Naive thymus-derived CD4-positive, alpha-beta T cell (primary cell): ENCODE measurements at regions of chr4 and their contacts with region 1.

Region 1: DNA sequence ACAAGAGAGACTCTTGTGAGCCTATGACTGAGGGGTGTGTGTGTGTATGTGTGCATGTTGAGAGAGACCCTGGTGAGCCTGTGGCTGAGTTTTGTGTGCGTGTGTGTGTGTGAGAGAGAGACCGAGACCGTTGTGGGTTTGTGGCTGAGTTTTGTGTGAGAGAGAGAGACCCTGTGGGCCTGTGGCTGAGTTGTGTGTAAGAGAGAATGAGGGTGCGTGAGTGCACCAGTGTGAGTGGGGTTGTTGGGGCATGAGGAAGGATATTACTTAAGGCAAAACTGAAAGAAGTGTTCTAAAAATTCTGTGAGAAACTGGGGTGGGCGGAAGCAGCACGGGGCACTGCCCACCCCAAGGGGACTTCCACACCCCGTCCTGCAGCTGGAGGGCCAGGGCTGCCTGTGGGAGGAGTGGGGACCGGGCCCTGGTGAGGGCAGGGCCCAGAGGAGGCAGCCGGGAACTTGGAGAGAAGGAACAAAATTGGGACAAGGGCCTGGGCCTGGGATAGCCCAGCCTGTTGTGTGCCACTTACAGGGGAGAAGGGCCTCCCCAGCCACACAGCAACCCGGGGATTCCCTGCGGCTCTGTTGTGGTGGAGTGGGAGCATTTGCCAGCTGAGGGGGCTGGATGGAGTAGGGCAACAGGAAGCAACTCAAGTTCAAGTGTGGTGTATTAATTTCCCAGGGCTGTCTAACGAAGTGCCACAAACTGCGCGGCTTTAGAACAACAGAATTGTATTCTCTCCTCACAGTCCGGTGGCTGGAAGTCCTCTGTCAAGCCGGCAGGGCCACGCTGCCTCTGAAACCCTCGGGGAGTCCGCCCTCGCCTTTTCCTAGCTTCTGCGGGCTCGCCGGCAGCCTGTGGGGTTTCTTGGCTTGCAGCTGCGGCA is 22.1 kb downstream of the TMEM131L start:
- DNase-seq: peak; percentile 51 to 87 (median 79)
- ATAC-seq: peak; percentile 81
- H3K4me3 ChIP-seq: peak overlapping the region; percentile 59
- H3K4me3 Mint-ChIP-seq: peak overlapping the region; percentile 79 to 93 (median 84)
- H3K27ac ChIP-seq: peak overlapping the region; percentile 85
- H3K27ac Mint-ChIP-seq: peak overlapping the region; percentile 87 to 99 (median 95)
- H3K4me1 ChIP-seq: peaks cover 57 to 71% of the 10 kb centered on the region in 2 donors
- H3K4me1 Mint-ChIP-seq: peaks cover 68 to 91% (median 81%) of the 10 kb centered on the region in 7 donors
- H3K27me3 ChIP-seq: no peaks in the 10 kb centered on the region
- H3K27me3 Mint-ChIP-seq: no peaks in the 10 kb centered on the region

Region 2: GRCh38 chr4:153471691-153472080 is 16.6 kb before region 1 on chr4:
- CTCF ChIA-PET with region 1: interaction called, 12 read pairs
- POLR2A ChIA-PET with region 1: interaction called, 92 read pairs
- intact Hi-C with region 1: loop called (anchors 1 kb)
- DNase-seq: peak in 7 of 9 donors; percentile 46 to 74 (median 65)
- ATAC-seq: peak; percentile 68
- H3K4me3 ChIP-seq: peak overlapping the region; percentile 72
- H3K4me3 Mint-ChIP-seq: peak overlapping the region; percentile 94 to 100 (median 96)
- H3K27ac ChIP-seq: peak overlapping the region; percentile 91
- H3K27ac Mint-ChIP-seq: peak overlapping the region; percentile 93 to 99 (median 98)
- H3K4me1 ChIP-seq: peaks cover 40 to 54% of the 10 kb centered on the region in 2 donors
- H3K4me1 Mint-ChIP-seq: peaks cover 58 to 80% (median 76%) of the 10 kb centered on the region in 7 donors
- H3K27me3 ChIP-seq: no peaks in the 10 kb centered on the region
- H3K27me3 Mint-ChIP-seq: no peaks in the 10 kb centered on the region

Region 3: GRCh38 chr4:153535772-153536513 is 47.7 kb after region 1 on chr4:
- CTCF ChIA-PET with region 1: interaction called, 7 read pairs
- POLR2A ChIA-PET with region 1: interaction called, 8 read pairs
- intact Hi-C with region 1: loop called in 1 of 2 experiments (anchors 1 kb)
- DNase-seq: peak in 2 of 9 donors; percentile 34 to 39
- ATAC-seq: peak; percentile 52
- H3K4me3 ChIP-seq: no peak overlapping the region
- H3K4me3 Mint-ChIP-seq: peak overlapping the region; percentile 16 to 79 (median 63)
- H3K27ac ChIP-seq: peak overlapping the region; percentile 62
- H3K27ac Mint-ChIP-seq: peak overlapping the region; percentile 80 to 98 (median 91)
- H3K4me1 ChIP-seq: peaks cover 29 to 87% of the 10 kb centered on the region in 2 donors
- H3K4me1 Mint-ChIP-seq: peaks cover 58 to 100% (median 94%) of the 10 kb centered on the region in 7 donors
- H3K27me3 ChIP-seq: no peaks in the 10 kb centered on the region
- H3K27me3 Mint-ChIP-seq: no peaks in the 10 kb centered on the region

Region 4: DNA sequence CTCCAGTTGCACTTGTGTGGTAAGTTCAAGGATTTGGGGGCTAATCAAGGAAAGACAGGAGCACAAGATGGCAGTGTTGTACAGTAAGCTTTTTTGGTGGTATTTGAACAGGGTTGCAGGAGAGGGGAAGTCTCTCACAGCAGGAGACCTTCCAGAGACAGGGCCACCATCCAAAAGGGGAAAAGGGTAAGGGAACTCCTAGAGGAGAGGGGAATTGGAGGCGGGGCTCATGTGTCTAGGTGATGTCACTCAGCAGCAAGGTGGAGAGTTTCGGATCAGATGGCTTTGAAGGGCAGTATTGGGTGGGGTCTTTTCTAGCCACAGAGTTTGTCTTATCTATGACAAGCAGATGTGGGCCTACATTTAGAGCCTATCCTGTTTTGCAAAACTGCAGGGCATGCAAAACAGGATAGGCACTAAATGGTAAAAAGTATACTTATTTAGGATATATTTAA is 285.0 kb after region 1 on chr4:
- CTCF ChIA-PET with region 1: no interaction called
- POLR2A ChIA-PET with region 1: no interaction called
- intact Hi-C with region 1: no loop called
- DNase-seq: no peak
- ATAC-seq: no peak
- H3K4me3 ChIP-seq: no peak overlapping the region
- H3K4me3 Mint-ChIP-seq: no peak overlapping the region
- H3K27ac ChIP-seq: no peak overlapping the region
- H3K27ac Mint-ChIP-seq: no peak overlapping the region
- H3K4me1 ChIP-seq: no peaks in the 10 kb centered on the region
- H3K4me1 Mint-ChIP-seq: peaks cover 0 to 3% (median 0%) of the 10 kb centered on the region in 7 donors
- H3K27me3 ChIP-seq: peaks cover 0 to 5% of the 10 kb centered on the region in 2 donors
- H3K27me3 Mint-ChIP-seq: peaks cover 6 to 56% (median 33%) of the 10 kb centered on the region in 5 donors